Caco-2 (cell line): ENCODE measurements at regions of chr13 and their contacts with region 1.

Region 1: GRCh38 chr13:50387051-50387581 is 371.9 kb downstream of the KCNRG start:
- DNase-seq: peak; percentile 53 to 62
- H3K4me3 ChIP-seq: no peak overlapping the region
- H3K4me3 Mint-ChIP-seq: no peak overlapping the region
- H3K27ac Mint-ChIP-seq: no peak overlapping the region
- H3K4me1 ChIP-seq: no peaks in the 10 kb centered on the region
- H3K4me1 Mint-ChIP-seq: peaks cover 9% of the 10 kb centered on the region
- H3K27me3 ChIP-seq: no peaks in the 10 kb centered on the region
- H3K27me3 Mint-ChIP-seq: no peaks in the 10 kb centered on the region
- CTCF ChIP-seq: peak in 1 of 2 experiments; percentile 71

Region 2: GRCh38 chr13:50170447-50171037 is 216.6 kb before region 1 on chr13:
- CTCF ChIA-PET with region 1: interaction called, 5 read pairs
- POLR2A ChIA-PET with region 1: no interaction called
- intact Hi-C with region 1: loop called (anchors 5 kb)
- DNase-seq: no peak
- H3K4me3 ChIP-seq: no peak overlapping the region
- H3K4me3 Mint-ChIP-seq: no peak overlapping the region
- H3K27ac Mint-ChIP-seq: no peak overlapping the region
- H3K4me1 ChIP-seq: no peaks in the 10 kb centered on the region
- H3K4me1 Mint-ChIP-seq: no peaks in the 10 kb centered on the region
- H3K27me3 ChIP-seq: no peaks in the 10 kb centered on the region
- H3K27me3 Mint-ChIP-seq: no peaks in the 10 kb centered on the region
- CTCF ChIP-seq: peak in 1 of 2 experiments; percentile 39

Region 3: GRCh38 chr13:50357586-50358118 is 29.5 kb before region 1 on chr13:
- CTCF ChIA-PET with region 1: no interaction called
- POLR2A ChIA-PET with region 1: no interaction called
- intact Hi-C with region 1: no loop called
- DNase-seq: peak in 1 of 2 experiments; percentile 12
- H3K4me3 ChIP-seq: no peak overlapping the region
- H3K4me3 Mint-ChIP-seq: peak overlapping the region; percentile 19
- H3K27ac Mint-ChIP-seq: peak overlapping the region; percentile 25
- H3K4me1 ChIP-seq: no peaks in the 10 kb centered on the region
- H3K4me1 Mint-ChIP-seq: peaks cover 10% of the 10 kb centered on the region
- H3K27me3 ChIP-seq: no peaks in the 10 kb centered on the region
- H3K27me3 Mint-ChIP-seq: no peaks in the 10 kb centered on the region
- CTCF ChIP-seq: no peak

Region 4: GRCh38 chr13:50911937-50912795 is 525.0 kb after region 1 on chr13:
- CTCF ChIA-PET with region 1: no interaction called
- POLR2A ChIA-PET with region 1: no interaction called
- intact Hi-C with region 1: loop called (anchors 10 kb)
- DNase-seq: peak; percentile 87 to 89
- H3K4me3 ChIP-seq: no peak overlapping the region
- H3K4me3 Mint-ChIP-seq: peak overlapping the region; percentile 55
- H3K27ac Mint-ChIP-seq: peak overlapping the region; percentile 55
- H3K4me1 ChIP-seq: peaks cover 13% of the 10 kb centered on the region
- H3K4me1 Mint-ChIP-seq: peaks cover 25% of the 10 kb centered on the region
- H3K27me3 ChIP-seq: no peaks in the 10 kb centered on the region
- H3K27me3 Mint-ChIP-seq: no peaks in the 10 kb centered on the region
- CTCF ChIP-seq: peak; percentile 88 to 92